Activated CD4-positive, alpha-beta T cell treated with anti-CD3 and anti-CD28 coated beads, Interleukin-2, amount 10 ng/mL, durations not matched to agents 24 days and 14 days (primary cell): ENCODE measurements at regions of chr11 and their contacts with region 1.

Region 1: GRCh38 chr11:6855971-6856541 is 6.8 kb upstream of the OR10A2 start:
- DNase-seq: no peak
- H3K4me3 Mint-ChIP-seq: no peak overlapping the region
- H3K27ac Mint-ChIP-seq: no peak overlapping the region
- H3K4me1 Mint-ChIP-seq: peaks cover 5% of the 10 kb centered on the region
- H3K27me3 Mint-ChIP-seq: no peaks in the 10 kb centered on the region

Region 2: DNA sequence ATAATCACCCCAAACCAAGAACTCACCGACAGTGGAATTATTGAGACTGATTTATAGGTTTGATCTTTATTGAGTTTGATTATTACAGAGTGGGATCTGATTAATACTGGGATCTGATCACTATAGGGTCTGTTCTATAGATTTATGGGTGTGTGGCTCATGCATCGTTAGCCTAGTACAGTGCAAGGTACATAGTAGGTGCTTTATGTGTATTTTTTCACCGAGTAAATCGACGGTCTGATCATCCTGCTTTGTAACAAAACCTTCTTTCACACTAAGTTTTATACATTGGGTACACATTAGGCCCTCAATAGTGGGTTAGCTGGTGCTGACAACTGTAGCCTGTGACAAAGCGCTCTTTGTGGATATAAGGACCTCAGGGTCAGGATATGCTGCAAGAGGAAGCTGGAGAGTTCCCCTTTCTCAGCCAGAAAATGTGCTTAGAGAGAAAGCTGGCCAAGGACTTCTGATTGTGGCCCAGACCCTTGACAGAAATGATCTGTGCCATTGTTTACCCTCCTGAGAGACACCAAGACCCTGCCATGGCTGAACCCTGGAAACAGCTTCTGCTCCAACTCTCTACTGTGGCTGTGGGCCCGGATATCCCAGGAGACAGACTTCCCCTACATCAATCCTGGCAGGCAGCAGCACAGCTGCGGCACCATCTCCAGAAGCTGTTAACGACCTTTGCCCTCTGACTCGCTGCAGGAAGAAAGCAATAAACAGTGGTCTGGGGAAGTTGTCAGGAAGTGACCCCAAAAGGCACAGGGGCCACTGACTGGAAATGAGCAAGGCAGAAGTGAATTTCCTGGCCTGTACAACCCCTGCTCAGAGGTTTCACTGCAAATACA is 220.7 kb before region 1 on chr11:
- intact Hi-C with region 1: no loop called
- DNase-seq: no peak
- H3K4me3 Mint-ChIP-seq: no peak overlapping the region
- H3K27ac Mint-ChIP-seq: no peak overlapping the region
- H3K4me1 Mint-ChIP-seq: peaks cover 6% of the 10 kb centered on the region
- H3K27me3 Mint-ChIP-seq: no peaks in the 10 kb centered on the region

Region 3: DNA sequence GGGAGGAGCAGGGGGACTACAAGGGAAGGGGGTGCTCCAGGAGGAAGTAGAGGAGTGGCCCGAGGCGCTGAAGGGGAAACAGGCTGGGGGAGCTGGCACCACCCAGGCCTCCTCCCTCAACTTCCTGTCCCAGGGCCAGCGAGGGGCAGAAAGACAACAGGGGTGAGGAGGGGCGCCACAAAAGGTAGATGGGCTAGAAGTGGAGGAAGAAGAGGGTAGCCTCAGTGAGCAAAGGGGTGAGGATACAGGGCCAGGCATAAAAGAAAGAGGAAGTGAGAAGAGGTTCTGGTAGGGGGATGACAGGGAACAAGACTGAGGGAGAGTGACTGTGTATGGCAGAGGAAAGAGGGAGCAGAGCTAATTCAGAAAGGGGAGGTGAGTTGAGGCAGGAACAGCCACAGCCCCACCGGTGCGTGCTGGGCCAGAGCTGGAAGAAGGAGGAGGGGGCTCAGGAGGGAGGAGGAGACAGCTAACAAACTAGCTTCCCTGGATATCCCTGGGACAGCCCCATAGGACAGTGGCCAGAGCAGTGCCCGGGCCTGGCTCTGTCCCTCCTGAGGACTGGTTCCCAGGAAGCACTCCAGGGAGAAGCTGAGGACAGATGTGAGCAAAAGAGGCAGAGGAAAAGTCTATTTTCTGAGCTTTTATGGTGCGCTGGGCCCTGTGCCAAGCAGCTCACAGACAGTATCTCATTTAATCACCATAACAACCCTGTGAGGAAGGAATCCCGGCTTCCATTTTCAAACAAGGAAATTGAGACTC is 209.0 kb before region 1 on chr11:
- intact Hi-C with region 1: no loop called
- DNase-seq: peak; percentile 73
- H3K4me3 Mint-ChIP-seq: no peak overlapping the region
- H3K27ac Mint-ChIP-seq: no peak overlapping the region
- H3K4me1 Mint-ChIP-seq: peaks cover 2% of the 10 kb centered on the region
- H3K27me3 Mint-ChIP-seq: no peaks in the 10 kb centered on the region

Region 4: GRCh38 chr11:6727971-6728760 is 127.9 kb before region 1 on chr11:
- intact Hi-C with region 1: no loop called
- DNase-seq: no peak
- H3K4me3 Mint-ChIP-seq: no peak overlapping the region
- H3K27ac Mint-ChIP-seq: no peak overlapping the region
- H3K4me1 Mint-ChIP-seq: peaks cover 24% of the 10 kb centered on the region
- H3K27me3 Mint-ChIP-seq: no peaks in the 10 kb centered on the region

Region 5: DNA sequence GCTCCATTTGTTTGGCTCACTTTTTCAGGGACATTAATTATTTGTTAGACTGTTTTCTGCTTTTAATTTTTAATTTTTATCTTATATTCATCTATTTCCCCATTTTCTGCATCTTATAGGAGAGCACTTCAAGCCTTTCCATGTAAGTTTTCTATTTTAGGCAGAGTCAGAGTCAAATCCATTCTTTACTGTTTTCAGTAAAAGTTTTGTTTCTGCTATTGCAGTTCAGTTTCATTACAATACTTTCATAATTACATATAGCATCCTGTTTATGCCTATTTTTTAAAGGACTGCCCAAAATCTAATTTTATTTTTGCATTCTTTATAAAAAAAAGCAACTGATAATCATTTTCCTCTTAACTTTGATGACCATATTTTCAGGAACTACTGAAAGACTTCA is 14.4 kb before region 1 on chr11:
- intact Hi-C with region 1: loop called (anchors 1 kb)
- DNase-seq: no peak
- H3K4me3 Mint-ChIP-seq: no peak overlapping the region
- H3K27ac Mint-ChIP-seq: no peak overlapping the region
- H3K4me1 Mint-ChIP-seq: peaks cover 2% of the 10 kb centered on the region
- H3K27me3 Mint-ChIP-seq: no peaks in the 10 kb centered on the region